ENCODE measurements at regions of chr2 and their contacts with region 1.

Region 1: GRCh38 chr2:73404409-73404808 is 18.8 kb downstream of the ALMS1 start:
- DNase-seq: no peak

Region 2: DNA sequence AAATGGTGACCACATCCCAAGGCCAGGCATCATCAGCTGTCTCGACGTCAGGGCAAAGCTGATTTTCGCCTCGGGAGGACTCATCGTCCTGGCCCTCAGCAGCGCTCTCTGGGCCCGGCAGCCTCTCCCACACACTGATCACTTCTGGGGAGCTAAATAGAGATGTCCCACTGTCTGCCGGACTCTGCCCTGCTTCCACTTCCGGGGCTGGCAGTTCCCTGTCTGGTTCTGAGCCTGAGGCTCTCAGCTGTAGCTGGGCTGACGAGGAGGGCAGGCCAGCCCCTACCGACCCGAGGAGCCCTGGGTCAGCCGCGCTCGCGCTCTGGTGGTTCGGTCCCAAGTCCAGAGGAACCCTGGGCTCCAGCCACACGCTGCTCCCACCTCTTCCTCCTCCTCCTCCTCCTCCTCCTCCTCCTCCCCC is 323.7 kb before region 1 on chr2:
- intact Hi-C with region 1: loop called in 1 of 2 experiments (anchors 5 kb)
- DNase-seq: no peak

Region 3: GRCh38 chr2:73448856-73449255 is 44.4 kb after region 1 on chr2:
- intact Hi-C with region 1: loop called in 1 of 2 experiments (anchors 2 kb)
- DNase-seq: peak; percentile 30

Region 4: DNA sequence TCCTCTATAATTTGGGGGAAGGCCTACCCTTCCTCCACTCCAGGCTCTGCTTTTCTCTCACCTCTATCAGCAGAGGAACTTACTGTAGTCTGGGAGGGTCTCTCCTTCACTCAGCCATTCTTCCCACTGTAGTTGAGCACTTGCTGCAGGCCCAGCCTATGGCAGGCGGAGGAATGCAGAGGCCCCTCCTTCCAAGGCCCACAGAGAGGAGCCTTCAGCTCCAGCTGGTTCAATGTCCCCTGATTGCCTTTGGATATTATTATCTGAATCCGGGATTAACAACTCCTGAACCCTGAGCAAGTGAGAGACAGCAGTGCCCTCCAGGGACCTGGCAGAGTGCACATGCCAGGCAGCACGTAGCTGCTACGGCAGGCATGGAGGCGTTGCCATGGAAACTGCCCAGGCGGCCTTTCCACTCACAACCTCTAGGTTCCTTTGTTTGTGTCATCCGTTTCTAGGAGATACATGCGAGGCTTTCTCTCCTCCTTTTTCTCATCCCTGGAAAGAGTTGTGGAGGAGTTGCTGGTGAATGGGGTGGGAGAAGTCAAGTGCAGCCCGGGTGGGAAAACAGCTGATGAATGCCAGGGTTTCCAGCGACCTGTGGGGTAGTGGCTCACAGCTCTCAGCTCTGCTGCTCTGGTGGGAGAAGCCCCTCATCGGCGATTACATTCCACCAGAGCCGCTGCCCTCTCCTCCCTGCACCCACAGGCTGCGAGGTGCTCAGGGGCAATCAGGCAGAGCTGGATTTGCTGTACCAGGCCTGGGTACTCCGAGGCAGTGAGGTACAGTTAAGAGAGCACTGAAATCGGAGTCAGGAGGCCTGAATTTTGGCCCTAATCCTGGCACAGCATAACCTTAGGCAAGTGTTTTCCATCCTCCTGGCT is 1374.2 kb after region 1 on chr2:
- intact Hi-C with region 1: no loop called
- DNase-seq: no peak

Measured in posterior vena cava (tissue), 2 donors.